B cell (primary cell): ENCODE measurements at regions of chr19 and their contacts with region 1.

Region 1: DNA sequence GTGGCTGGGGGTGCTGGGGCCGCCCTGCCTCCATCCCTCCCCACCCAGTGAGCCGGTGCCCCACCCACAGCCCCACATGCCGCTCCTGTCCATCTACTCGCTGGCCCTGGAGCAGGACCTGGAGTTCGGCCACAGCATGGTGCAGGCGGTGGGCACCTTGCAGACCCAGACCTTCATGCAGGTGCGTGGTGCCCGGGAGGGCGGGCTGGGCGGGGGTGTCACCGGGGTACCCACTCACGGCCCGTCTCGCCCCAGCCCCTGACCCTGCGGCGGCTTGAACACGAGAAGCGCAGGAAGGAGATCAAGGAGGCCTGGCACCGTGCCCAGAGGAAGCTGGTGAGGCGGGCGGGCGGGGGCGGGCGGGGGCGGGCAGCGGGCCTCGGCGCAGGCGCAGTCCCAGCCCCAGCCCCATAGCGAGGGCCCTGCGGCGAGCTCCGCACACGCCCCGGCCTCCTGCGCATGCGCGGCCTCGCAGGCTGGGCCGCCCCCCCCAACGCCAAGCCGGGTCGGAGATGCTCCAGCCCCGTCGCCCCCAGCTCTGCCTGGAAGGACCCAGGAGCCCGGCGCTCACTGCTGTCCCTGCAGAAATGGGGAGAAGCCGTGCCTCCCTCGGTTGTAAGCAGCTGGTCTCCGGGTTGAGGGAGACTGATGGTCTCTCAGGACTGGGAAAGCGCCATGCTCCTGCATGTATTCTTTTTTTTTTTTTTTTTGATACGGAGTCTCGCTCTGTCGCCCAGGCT is 7.7 kb downstream of the ARHGAP45 start:
- DNase-seq: peak; percentile 93
- ATAC-seq: peak; percentile 53
- H3K4me3 ChIP-seq: peak overlapping the region in 1 of 5 experiments; percentile 35
- H3K4me3 Mint-ChIP-seq: peak overlapping the region; percentile 66
- H3K27ac ChIP-seq: peak overlapping the region; percentile 7 to 19
- H3K27ac Mint-ChIP-seq: peak overlapping the region; percentile 91
- H3K4me1 ChIP-seq: peaks cover 65 to 90% of the 10 kb centered on the region in 2 donors
- H3K4me1 Mint-ChIP-seq: peaks cover 48% of the 10 kb centered on the region
- H3K27me3 ChIP-seq: no peaks in the 10 kb centered on the region
- H3K27me3 Mint-ChIP-seq: no peaks in the 10 kb centered on the region
- CTCF ChIP-seq: no peak

Region 2: DNA sequence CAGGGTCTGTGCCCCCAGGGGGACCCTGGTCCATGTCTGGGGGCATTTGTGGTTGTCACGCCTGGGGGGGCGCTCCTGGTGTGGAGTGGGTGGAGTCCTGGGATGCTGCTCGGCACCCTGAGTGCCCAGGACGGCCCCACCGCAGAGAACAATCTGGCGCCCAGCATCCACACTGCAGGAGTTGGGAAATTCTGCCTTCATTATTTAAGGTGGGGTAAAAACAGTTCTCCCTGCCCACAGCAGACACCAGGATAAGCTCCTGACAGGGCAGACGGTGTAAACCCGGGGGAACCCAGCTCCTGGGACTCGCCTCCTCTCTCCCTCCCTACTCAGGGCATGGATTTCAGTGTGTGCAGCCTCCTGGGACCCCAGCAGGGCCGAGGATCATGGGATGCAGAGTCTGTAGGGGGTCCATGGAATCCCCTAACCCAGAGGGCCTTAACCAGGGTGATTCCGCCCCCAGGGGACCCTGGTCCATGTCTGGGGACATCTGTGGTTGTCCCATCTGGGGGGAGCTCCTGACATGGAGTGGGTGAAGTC is 98.2 kb before region 1 on chr19:
- CTCF ChIA-PET with region 1: no interaction called
- POLR2A ChIA-PET with region 1: no interaction called
- intact Hi-C with region 1: no loop called
- DNase-seq: no peak
- ATAC-seq: no peak
- H3K4me3 ChIP-seq: no peak overlapping the region
- H3K4me3 Mint-ChIP-seq: no peak overlapping the region
- H3K27ac ChIP-seq: no peak overlapping the region
- H3K27ac Mint-ChIP-seq: no peak overlapping the region
- H3K4me1 ChIP-seq: no peaks in the 10 kb centered on the region
- H3K4me1 Mint-ChIP-seq: no peaks in the 10 kb centered on the region
- H3K27me3 ChIP-seq: no peaks in the 10 kb centered on the region
- H3K27me3 Mint-ChIP-seq: no peaks in the 10 kb centered on the region
- CTCF ChIP-seq: no peak

Region 3: DNA sequence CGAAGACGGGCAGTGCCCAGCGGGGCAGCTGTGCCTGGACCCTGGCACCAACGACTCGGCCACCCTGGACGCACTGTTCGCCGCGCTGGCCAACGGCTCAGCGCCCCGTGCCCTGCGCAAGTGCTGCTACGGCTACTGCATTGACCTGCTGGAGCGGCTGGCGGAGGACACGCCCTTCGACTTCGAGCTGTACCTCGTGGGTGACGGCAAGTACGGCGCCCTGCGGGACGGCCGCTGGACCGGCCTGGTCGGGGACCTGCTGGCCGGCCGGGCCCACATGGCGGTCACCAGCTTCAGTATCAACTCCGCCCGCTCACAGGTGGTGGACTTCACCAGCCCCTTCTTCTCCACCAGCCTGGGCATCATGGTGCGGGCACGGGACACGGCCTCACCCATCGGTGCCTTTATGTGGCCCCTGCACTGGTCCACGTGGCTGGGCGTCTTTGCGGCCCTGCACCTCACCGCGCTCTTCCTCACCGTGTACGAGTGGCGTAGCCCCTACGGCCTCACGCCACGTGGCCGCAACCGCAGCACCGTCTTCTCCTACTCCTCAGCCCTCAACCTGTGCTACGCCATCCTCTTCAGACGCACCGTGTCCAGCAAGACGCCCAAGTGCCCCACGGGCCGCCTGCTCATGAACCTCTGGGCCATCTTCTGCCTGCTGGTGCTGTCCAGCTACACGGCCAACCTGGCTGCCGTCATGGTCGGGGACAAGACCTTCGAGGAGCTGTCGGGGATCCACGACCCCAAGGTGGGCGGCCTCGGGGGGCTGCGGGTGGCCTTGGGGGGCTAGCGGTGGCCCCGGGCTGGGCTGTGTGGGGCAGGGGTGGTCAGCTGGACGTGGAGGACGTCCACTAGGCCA is 69.7 kb before region 1 on chr19:
- CTCF ChIA-PET with region 1: no interaction called
- POLR2A ChIA-PET with region 1: no interaction called
- intact Hi-C with region 1: no loop called
- DNase-seq: no peak
- ATAC-seq: no peak
- H3K4me3 ChIP-seq: no peak overlapping the region
- H3K4me3 Mint-ChIP-seq: peak overlapping the region; percentile 42
- H3K27ac ChIP-seq: no peak overlapping the region
- H3K27ac Mint-ChIP-seq: no peak overlapping the region
- H3K4me1 ChIP-seq: peaks cover 11 to 13% of the 10 kb centered on the region in 2 donors
- H3K4me1 Mint-ChIP-seq: peaks cover 9% of the 10 kb centered on the region
- H3K27me3 ChIP-seq: peaks cover 0 to 24% (median 11%) of the 10 kb centered on the region in 4 experiments
- H3K27me3 Mint-ChIP-seq: peaks cover 5% of the 10 kb centered on the region
- CTCF ChIP-seq: no peak

Region 4: GRCh38 chr19:1026189-1027019 is 48.3 kb before region 1 on chr19 and contains the start of gene CNN2:
- CTCF ChIA-PET with region 1: interaction called, 9 read pairs
- POLR2A ChIA-PET with region 1: interaction called, 33 read pairs
- intact Hi-C with region 1: loop called (anchors 1 kb)
- DNase-seq: peak; percentile 81
- ATAC-seq: peak; percentile 57
- H3K4me3 ChIP-seq: peak within 1 kb of the TSS; percentile 60 to 99 (median 87)
- H3K4me3 Mint-ChIP-seq: peak within 1 kb of the TSS; percentile 94
- H3K27ac ChIP-seq: peak within 1 kb of the TSS; percentile 74 to 85
- H3K27ac Mint-ChIP-seq: peak within 1 kb of the TSS; percentile 91
- H3K4me1 ChIP-seq: peaks cover 16 to 37% of the 10 kb centered on the region in 2 donors
- H3K4me1 Mint-ChIP-seq: peaks cover 27% of the 10 kb centered on the region
- H3K27me3 ChIP-seq: no peaks in the 10 kb centered on the region
- H3K27me3 Mint-ChIP-seq: no peaks in the 10 kb centered on the region
- CTCF ChIP-seq: no peak
- total RNA-seq, gene CNN2: 186 and 198 TPM in 2 replicates

Region 5: GRCh38 chr19:1087813-1088415 is 13.2 kb after region 1 on chr19:
- CTCF ChIA-PET with region 1: interaction called, 49 read pairs
- POLR2A ChIA-PET with region 1: interaction called, 97 read pairs
- intact Hi-C with region 1: loop called (anchors 1 kb)
- DNase-seq: peak; percentile 86
- ATAC-seq: peak; percentile 61
- H3K4me3 ChIP-seq: peak overlapping the region in 2 of 5 experiments; percentile 1 to 8
- H3K4me3 Mint-ChIP-seq: peak overlapping the region; percentile 69
- H3K27ac ChIP-seq: peak overlapping the region; percentile 29 to 82
- H3K27ac Mint-ChIP-seq: peak overlapping the region; percentile 91
- H3K4me1 ChIP-seq: peaks cover 34 to 42% of the 10 kb centered on the region in 2 donors
- H3K4me1 Mint-ChIP-seq: peaks cover 35% of the 10 kb centered on the region
- H3K27me3 ChIP-seq: no peaks in the 10 kb centered on the region
- H3K27me3 Mint-ChIP-seq: no peaks in the 10 kb centered on the region
- CTCF ChIP-seq: peak; percentile 15

Region 6: DNA sequence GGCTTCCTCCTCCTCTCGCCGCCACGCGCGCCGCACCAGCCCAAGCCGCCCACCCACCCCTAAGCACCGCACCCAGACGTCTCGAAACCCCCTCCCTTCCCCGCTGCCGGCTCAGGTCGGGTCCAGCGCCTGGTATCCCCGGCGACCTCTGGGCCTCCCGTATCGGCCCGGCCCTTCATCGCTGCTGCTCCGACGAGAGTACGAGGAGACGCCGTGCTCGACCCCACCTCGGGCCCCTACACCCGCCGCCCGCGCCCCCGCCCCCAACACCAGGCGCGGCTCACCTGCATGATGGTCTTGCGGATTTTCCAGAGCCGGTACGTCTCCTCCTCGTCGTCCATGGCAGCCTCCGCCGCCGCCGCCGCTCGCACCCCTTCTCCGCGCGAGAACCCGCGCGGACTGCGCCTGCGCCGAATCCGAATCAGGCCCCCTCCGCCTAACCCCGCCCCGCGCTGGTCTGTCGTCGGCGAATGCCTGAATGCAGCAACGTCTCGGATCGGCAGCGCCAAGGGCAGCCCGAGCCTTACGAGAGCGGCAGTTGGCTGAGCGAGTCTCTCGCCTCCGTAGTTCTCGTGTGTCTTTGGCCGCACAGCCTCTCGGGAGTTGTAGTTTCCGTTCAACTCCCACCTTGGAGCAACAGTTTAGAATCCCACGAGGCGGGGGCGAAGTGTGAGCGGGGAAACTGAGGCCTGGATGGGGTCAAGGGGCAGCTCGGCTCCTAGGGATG is 20.4 kb after region 1 on chr19 and contains the start of gene POLR2E:
- CTCF ChIA-PET with region 1: no interaction called
- POLR2A ChIA-PET with region 1: interaction called, 97 read pairs
- intact Hi-C with region 1: loop called (anchors 1 kb)
- DNase-seq: peak; percentile 99
- ATAC-seq: peak; percentile 99
- H3K4me3 ChIP-seq: peak within 1 kb of the TSS; percentile 56 to 86 (median 74)
- H3K4me3 Mint-ChIP-seq: peak within 1 kb of the TSS; percentile 97
- H3K27ac ChIP-seq: peak within 1 kb of the TSS; percentile 27 to 70
- H3K27ac Mint-ChIP-seq: peak within 1 kb of the TSS; percentile 95
- H3K4me1 ChIP-seq: peaks cover 19 to 23% of the 10 kb centered on the region in 2 donors
- H3K4me1 Mint-ChIP-seq: peaks cover 35% of the 10 kb centered on the region
- H3K27me3 ChIP-seq: no peaks in the 10 kb centered on the region
- H3K27me3 Mint-ChIP-seq: no peaks in the 10 kb centered on the region
- CTCF ChIP-seq: no peak
- total RNA-seq, gene POLR2E: 103 and 106 TPM in 2 replicates